Calu3 (cell line): ENCODE measurements at regions of chr2 and their contacts with region 1.

Region 1: DNA sequence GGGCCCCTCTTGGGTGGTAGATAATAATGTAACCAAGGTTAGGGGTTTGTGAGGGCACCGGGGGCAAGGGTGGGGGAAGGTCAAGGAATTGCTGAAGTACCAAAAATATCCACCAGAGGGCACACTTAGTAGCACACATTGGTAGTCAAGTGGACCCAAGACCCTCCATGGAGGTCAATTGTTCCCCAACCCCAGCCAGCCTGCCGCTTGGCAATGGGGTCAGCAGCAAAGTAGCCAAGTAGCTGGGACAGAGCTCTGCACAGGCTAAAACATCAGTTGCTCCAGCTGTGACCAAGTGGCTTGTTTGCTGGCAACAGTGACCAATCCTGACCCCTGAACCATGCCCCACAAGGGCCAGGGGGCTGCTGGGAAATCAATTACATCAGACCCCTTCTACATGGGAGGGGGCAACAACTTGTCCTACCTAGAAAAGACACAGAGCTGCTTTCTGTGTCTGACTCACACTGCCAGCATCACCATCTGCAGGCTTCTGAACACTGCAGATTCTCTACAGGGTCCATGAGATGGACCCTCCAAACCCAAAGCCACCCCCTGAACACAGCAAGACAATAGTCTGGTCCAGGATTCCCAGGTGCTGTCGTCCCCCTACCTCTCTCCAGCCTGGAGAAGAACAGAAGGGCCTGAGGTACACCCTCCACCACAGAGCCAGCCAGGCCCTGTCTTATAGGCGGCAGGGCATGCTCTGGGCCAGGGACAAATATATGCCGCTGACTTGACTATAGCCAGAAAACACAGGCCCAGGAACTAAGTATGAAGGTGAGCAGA is 76.0 kb downstream of the EMX1 start:
- DNase-seq: peak; percentile 55
- H3K4me3 Mint-ChIP-seq: no peak overlapping the region
- H3K27ac Mint-ChIP-seq: no peak overlapping the region
- H3K4me1 Mint-ChIP-seq: no peaks in the 10 kb centered on the region
- H3K27me3 Mint-ChIP-seq: no peaks in the 10 kb centered on the region
- CTCF ChIP-seq: peak; percentile 90

Region 2: GRCh38 chr2:73071360-73072133 is 78.2 kb after region 1 on chr2 and contains the start of gene SFXN5:
- CTCF ChIA-PET with region 1: no interaction called
- intact Hi-C with region 1: loop called (anchors 10 kb)
- DNase-seq: peak; percentile 98
- H3K4me3 Mint-ChIP-seq: peak within 1 kb of the TSS; percentile 86
- H3K27ac Mint-ChIP-seq: peak within 1 kb of the TSS; percentile 92
- H3K4me1 Mint-ChIP-seq: peaks cover 25% of the 10 kb centered on the region
- H3K27me3 Mint-ChIP-seq: no peaks in the 10 kb centered on the region
- CTCF ChIP-seq: no peak
- total RNA-seq, gene SFXN5: 11.3 and 16.4 TPM in 2 replicates

Region 3: GRCh38 chr2:73163483-73164367 is 170.4 kb after region 1 on chr2:
- CTCF ChIA-PET with region 1: interaction called, 5 read pairs
- intact Hi-C with region 1: loop called (anchors 1 kb)
- DNase-seq: peak; percentile 80
- H3K4me3 Mint-ChIP-seq: no peak overlapping the region
- H3K27ac Mint-ChIP-seq: no peak overlapping the region
- H3K4me1 Mint-ChIP-seq: no peaks in the 10 kb centered on the region
- H3K27me3 Mint-ChIP-seq: peaks cover 44% of the 10 kb centered on the region
- CTCF ChIP-seq: peak; percentile 90

Region 4: DNA sequence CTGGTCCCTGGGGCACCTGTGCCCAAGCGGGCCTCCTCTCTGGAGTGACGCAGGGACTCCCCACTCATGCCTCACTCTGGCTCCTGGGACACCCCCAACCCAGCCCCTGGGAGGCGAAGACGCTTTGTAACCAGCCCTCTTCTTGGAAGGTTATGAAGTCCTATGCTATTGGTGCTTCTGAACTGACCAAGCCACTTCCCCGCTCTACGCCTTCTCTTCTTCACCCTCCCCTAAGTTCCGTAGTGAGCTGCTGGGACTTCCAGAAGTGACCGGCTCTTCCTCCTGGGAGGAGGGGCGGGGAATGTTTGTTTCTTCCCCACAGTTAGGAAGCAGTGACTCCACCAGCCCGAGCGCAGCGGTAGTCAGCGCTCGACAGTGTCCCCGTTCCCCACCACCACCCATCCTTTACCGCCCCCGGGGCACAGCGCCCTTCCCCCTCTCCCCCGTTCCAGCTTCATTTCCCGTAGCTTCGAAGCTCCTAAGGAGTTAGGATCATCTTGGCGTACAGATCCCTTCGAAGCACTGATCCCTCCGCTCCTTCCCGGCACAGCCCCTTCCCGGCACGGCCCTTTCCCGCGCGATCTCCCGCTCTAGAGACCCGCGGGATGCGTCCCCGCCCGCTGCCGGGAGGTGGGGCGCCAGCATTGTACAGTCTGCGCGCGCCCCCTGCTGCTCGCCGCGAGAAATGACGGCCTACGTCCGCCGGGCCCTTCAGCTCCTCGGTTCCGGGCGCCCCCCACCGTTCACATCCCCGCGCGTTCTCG is 183.7 kb after region 1 on chr2:
- CTCF ChIA-PET with region 1: interaction called, 8 read pairs
- intact Hi-C with region 1: loop called (anchors 5 kb)
- DNase-seq: peak; percentile 94
- H3K4me3 Mint-ChIP-seq: peak overlapping the region; percentile 86
- H3K27ac Mint-ChIP-seq: no peak overlapping the region
- H3K4me1 Mint-ChIP-seq: peaks cover 9% of the 10 kb centered on the region
- H3K27me3 Mint-ChIP-seq: peaks cover 86% of the 10 kb centered on the region
- CTCF ChIP-seq: peak; percentile 95